Natural killer cell (primary cell): ENCODE measurements at regions of chr16 and their contacts with region 1.

Region 1: GRCh38 chr16:48164907-48165726 is 9.3 kb upstream of the ABCC12 start:
- DNase-seq: peak; percentile 60 to 78
- ATAC-seq: peak; percentile 76 to 90 (median 83)
- H3K4me3 ChIP-seq: no peak overlapping the region
- H3K4me3 Mint-ChIP-seq: no peak overlapping the region
- H3K27ac ChIP-seq: no peak overlapping the region
- H3K27ac Mint-ChIP-seq: no peak overlapping the region
- H3K4me1 ChIP-seq: peaks cover 3% of the 10 kb centered on the region
- H3K4me1 Mint-ChIP-seq: peaks cover 5 to 6% of the 10 kb centered on the region in 2 donors
- H3K27me3 ChIP-seq: no peaks in the 10 kb centered on the region
- H3K27me3 Mint-ChIP-seq: peaks cover 4 to 17% of the 10 kb centered on the region in 2 donors
- CTCF ChIP-seq: peak; percentile 69

Region 2: DNA sequence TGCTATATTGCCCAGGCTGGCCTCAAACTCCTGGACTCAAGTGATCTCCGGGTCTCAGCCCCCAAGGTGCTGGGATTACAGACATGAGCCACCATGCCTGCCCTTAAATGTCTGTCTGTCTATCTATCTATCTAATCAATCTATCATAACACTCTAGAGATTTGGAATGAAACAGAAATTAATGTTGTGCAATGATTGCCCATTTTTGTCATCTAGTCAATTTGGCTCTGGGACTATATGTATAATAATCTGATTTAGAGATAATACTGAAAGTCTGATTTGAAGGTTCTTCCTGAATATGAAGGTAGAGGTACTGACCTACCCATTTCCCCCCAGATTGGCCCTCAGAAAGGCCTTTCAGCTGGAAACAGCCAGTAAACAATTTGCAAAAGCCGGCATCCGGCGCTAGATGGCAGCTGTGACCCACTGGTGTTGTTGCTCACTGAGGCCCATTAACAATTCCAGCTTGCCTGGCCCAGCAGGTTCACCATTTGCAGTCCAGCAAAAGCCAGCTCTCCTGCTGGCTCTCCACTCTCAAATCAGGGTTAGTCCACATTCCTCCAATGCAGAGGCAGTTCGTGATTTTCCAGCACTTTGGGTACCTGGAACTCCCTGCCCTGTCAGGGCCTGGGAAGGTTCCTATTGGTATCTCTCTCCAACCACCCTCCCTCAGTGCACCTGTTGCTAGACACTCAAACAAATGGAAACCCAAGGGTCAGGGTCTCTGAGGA is 1311.2 kb before region 1 on chr16:
- intact Hi-C with region 1: loop called (anchors 10 kb)
- DNase-seq: peak; percentile 39 to 70
- ATAC-seq: peak in 2 of 3 donors; percentile 47 to 72
- H3K4me3 ChIP-seq: no peak overlapping the region
- H3K4me3 Mint-ChIP-seq: no peak overlapping the region
- H3K27ac ChIP-seq: no peak overlapping the region
- H3K27ac Mint-ChIP-seq: no peak overlapping the region
- H3K4me1 ChIP-seq: no peaks in the 10 kb centered on the region
- H3K4me1 Mint-ChIP-seq: no peaks in the 10 kb centered on the region
- H3K27me3 ChIP-seq: no peaks in the 10 kb centered on the region
- H3K27me3 Mint-ChIP-seq: no peaks in the 10 kb centered on the region
- CTCF ChIP-seq: peak; percentile 63

Region 3: DNA sequence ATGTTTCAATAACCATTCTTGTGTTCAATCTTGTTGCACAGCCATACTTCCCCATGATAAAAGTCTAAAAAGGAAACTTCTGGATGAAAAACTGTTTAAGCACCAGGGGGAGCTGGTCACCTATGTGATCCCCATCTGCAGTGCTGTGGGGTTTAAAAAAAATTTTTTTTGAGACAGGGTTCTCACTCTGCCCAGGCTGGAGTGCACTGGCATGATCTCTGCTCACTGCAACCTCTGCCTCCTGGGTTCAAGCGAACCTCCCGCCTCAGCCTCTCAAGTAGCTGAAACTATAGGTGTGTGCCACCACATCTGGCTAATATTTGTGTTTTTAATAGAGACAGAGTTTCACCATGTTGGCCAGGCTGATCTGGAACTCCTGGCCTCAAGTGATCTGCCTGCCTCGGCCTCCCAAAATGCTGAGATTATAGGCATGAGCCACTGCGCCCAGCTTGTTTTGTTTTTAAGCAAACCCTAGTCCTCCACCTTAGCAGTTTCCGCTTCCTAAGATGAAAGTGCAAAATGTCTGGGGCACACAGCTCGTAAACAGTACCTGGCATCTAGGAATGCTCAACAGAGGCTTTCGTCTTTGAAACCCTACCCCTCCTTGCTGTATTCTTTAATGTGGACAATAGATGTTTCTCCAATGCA is 1217.1 kb before region 1 on chr16:
- intact Hi-C with region 1: loop called (anchors 2 kb)
- DNase-seq: peak in 1 of 2 donors; percentile 71
- ATAC-seq: peak in 2 of 3 donors; percentile 54 to 61
- H3K4me3 ChIP-seq: no peak overlapping the region
- H3K4me3 Mint-ChIP-seq: no peak overlapping the region
- H3K27ac ChIP-seq: no peak overlapping the region
- H3K27ac Mint-ChIP-seq: no peak overlapping the region
- H3K4me1 ChIP-seq: no peaks in the 10 kb centered on the region
- H3K4me1 Mint-ChIP-seq: no peaks in the 10 kb centered on the region
- H3K27me3 ChIP-seq: no peaks in the 10 kb centered on the region
- H3K27me3 Mint-ChIP-seq: no peaks in the 10 kb centered on the region
- CTCF ChIP-seq: peak; percentile 45

Region 4: GRCh38 chr16:47037746-47038458 is 1127.2 kb before region 1 on chr16:
- intact Hi-C with region 1: loop called (anchors 2 kb)
- DNase-seq: peak; percentile 87 to 91
- ATAC-seq: peak; percentile 96 to 99 (median 99)
- H3K4me3 ChIP-seq: peak overlapping the region; percentile 36
- H3K4me3 Mint-ChIP-seq: peak overlapping the region; percentile 74
- H3K27ac ChIP-seq: no peak overlapping the region
- H3K27ac Mint-ChIP-seq: no peak overlapping the region
- H3K4me1 ChIP-seq: peaks cover 12% of the 10 kb centered on the region
- H3K4me1 Mint-ChIP-seq: peaks cover 6 to 11% of the 10 kb centered on the region in 2 donors
- H3K27me3 ChIP-seq: peaks cover 22% of the 10 kb centered on the region
- H3K27me3 Mint-ChIP-seq: peaks cover 42 to 58% of the 10 kb centered on the region in 2 donors
- CTCF ChIP-seq: peak; percentile 98

Region 5: GRCh38 chr16:48136547-48137360 is 28.4 kb before region 1 on chr16:
- intact Hi-C with region 1: no loop called
- DNase-seq: no peak
- ATAC-seq: no peak
- H3K4me3 ChIP-seq: no peak overlapping the region
- H3K4me3 Mint-ChIP-seq: no peak overlapping the region
- H3K27ac ChIP-seq: no peak overlapping the region
- H3K27ac Mint-ChIP-seq: no peak overlapping the region
- H3K4me1 ChIP-seq: no peaks in the 10 kb centered on the region
- H3K4me1 Mint-ChIP-seq: no peaks in the 10 kb centered on the region
- H3K27me3 ChIP-seq: no peaks in the 10 kb centered on the region
- H3K27me3 Mint-ChIP-seq: peaks cover 6 to 13% of the 10 kb centered on the region in 2 donors
- CTCF ChIP-seq: no peak

Region 6: GRCh38 chr16:48150707-48151106 is 14.4 kb before region 1 on chr16:
- intact Hi-C with region 1: no loop called
- DNase-seq: no peak
- ATAC-seq: no peak
- H3K4me3 ChIP-seq: no peak overlapping the region
- H3K4me3 Mint-ChIP-seq: no peak overlapping the region
- H3K27ac ChIP-seq: no peak overlapping the region
- H3K27ac Mint-ChIP-seq: no peak overlapping the region
- H3K4me1 ChIP-seq: no peaks in the 10 kb centered on the region
- H3K4me1 Mint-ChIP-seq: no peaks in the 10 kb centered on the region
- H3K27me3 ChIP-seq: no peaks in the 10 kb centered on the region
- H3K27me3 Mint-ChIP-seq: peaks cover 19 to 44% of the 10 kb centered on the region in 2 donors
- CTCF ChIP-seq: no peak